Right ventricle myocardium inferior (tissue), 1 donor: ENCODE measurements at regions of chr11 and their contacts with region 1.

Region 1: DNA sequence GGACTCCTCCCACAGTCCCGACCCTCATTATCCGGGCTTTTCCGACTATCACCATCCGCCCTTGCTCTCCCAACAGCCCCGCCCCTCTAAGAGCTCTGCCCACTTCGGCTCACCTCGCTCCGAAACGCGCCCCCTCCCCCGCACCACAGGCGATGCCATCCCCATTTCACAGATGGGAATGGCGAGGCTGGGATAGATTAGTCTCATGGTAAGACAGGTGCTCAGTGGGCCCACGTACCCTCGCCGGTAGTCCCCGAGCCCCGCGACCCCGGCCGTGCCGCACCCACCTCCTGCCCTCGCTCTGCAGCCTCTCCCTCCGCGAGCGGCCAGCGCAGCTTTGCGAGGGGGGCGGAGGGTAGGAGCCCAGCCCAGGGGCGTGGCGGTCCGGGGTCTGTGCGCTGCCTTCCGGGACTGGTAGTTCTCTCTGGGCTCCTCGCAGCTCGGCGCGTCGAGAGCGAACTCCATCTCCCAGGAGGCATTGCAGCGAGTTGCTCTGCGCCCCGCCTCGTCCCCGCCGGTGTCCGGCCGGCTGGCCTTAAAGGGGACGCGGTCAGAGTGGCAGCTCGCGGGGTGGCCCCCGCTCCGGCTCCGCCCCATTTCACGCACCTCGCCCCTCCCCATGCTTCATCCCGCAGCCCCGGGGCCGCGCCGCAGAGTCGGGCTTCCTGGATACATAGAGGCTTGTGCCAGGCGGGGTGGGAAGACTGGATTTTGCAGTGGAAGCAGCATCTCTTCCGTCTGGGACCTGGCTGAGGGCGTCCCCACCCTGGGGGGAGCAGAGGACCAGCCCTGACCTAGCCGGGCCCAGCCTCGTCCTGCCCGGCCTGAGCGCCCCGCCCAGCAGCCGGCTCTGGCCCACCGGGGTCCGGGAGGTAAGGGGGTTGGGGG is at the starts of genes KCTD21 and USP35:
- DNase-seq: peak; percentile 99
- ATAC-seq: peak; percentile 98
- total RNA-seq, gene KCTD21: 10.6 TPM
- total RNA-seq, gene USP35: 6.2 TPM

Region 2: GRCh38 chr11:78079232-78080083 is 109.1 kb before region 1 on chr11 and contains the start of gene NDUFC2:
- intact Hi-C with region 1: loop called (anchors 5 kb)
- DNase-seq: peak; percentile 91
- ATAC-seq: peak; percentile 92
- total RNA-seq, gene NDUFC2: 337 TPM

Region 3: DNA sequence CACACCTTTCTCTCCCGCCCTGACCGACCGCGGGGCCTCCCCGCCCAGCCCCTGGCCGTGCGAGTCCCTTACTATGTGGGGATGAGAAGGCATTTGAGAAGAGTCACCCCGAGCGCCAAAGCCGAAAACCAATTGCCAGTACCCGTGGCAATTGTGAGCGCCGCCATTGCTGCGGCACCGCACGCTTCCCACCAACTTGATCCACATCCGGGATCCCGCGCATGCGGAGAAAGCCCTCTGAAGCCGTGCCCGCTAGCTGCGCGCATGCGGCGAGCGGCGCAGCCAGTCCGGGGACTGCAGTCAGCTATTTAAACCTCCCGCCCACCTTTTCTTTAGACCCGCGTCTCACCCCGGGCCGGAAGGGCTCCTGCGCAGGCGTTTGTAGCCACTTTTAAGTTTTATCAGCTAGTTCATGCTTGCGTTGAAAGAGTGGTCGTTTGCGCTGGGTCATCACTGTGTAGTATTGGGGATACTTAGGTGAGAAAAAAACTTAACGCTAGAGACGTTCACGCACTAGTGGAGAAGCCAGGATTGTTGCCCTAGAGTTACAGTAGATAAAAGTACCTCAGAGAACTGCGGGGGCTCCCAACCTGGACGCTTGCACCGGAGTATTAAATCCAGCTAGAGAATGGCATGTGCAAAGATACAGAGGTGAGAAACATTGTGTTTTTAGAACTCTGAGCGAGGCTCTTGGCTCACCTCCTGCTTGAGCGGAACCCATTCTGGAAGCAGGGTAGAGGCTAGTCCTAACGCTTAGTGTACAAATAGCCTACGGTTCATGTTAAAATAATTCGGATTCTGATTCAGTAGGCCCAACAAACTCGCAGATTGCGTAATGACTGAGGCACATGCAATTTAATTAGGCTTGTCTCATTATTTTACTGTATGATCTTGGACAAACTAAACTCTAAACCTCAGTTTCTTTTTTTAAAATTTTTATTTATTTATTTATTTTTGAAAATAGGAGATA is 48.8 kb before region 1 on chr11 and contains the start of gene ALG8:
- intact Hi-C with region 1: loop called (anchors 1 kb)
- DNase-seq: peak; percentile 98
- ATAC-seq: peak; percentile 99
- total RNA-seq, gene ALG8: 16.7 TPM

Region 4: GRCh38 chr11:78168539-78169477 is 19.7 kb before region 1 on chr11:
- intact Hi-C with region 1: loop called (anchors 2 kb)
- DNase-seq: peak; percentile 90
- ATAC-seq: peak; percentile 94

Region 5: DNA sequence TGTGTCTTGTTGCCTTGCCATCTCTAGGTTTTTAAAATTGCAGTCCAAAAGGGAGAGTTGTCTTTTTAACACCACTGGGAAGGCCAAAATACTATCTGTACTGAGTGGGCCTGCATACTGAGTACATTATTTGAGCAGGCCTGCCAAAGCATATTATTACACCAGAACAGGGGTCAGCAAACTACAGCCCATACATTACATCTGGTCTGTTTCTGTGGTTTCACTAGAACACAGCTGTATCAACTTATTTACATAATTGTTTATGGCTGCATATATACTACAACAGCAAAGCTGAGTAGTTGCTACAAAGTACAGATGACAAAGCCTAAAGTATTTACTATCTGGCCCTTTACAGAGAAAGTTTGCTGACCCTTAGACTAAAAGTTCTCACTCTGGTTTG is 74.2 kb after region 1 on chr11:
- intact Hi-C with region 1: no loop called
- DNase-seq: no peak
- ATAC-seq: no peak